ENCODE measurements at regions of chr6 and their contacts with region 1.

Region 1: DNA sequence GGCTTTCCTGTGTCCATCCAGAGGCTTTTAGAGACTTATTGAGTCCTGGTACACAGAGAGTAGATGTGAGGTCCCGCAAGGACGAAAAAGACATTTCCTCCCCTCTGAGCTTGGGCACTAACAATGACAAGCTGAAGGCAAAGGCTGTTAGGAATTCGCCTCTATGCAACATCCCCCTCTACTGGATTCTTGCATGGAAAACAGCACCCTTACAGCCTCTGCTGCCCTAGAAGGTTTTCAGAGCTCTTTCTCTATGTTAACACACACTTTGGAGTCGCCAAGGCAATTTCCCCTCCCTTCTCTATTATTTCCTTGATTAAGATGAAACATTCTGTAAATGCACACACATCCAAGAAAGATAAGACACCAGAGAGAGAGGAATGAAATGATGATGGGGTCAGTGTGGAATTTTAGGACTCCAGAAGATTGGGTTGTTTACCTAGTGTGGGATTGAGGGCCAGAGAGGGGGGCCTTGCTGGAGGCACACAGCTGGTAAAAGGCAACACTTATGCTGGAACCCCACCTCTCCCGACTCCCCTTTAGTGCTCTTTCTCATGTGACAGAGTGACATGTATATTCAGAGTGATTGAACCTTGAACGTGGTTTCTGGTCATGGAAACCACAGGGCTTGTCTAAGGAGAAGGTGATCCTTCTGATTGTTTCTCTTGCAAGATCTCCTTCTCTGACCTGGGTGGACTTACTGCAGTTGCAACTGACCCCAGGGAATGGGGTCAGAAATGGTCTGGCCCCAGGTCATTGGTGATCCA is 300.7 kb downstream of the CLIC5 start:
- DNase-seq: peak; percentile 68
- H3K4me3 ChIP-seq: no peak overlapping the region
- CTCF ChIP-seq: peak; percentile 78

Region 2: GRCh38 chr6:45483021-45483420 is 231.9 kb before region 1 on chr6:
- CTCF ChIA-PET with region 1: interaction called, 21 read pairs
- POLR2A ChIA-PET with region 1: interaction called, 3 read pairs
- DNase-seq: peak; percentile 97
- H3K4me3 ChIP-seq: no peak overlapping the region
- CTCF ChIP-seq: no peak

Region 3: GRCh38 chr6:45555981-45556771 is 158.7 kb before region 1 on chr6:
- CTCF ChIA-PET with region 1: interaction called, 17 read pairs
- POLR2A ChIA-PET with region 1: no interaction called
- DNase-seq: no peak
- H3K4me3 ChIP-seq: peak overlapping the region; percentile 40
- CTCF ChIP-seq: no peak

Region 4: DNA sequence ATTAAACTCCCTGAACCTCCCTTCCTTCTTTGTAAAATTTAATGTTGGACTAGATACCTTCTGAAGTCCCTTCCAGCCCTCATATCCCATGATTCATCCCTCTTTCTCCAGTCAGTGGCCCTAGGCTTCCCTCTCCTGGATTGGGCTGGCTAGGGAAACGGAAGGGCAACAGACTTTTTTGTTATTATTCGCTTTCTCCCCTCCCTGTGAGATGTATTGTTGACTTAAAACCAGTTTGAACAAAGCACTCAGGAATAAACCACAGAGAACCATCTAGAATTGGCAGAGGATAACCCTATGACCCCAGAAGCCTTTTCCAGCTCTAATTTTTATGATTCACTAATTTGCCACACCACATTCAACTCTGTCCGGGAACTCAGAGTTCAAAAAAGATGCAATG is 97.5 kb before region 1 on chr6:
- CTCF ChIA-PET with region 1: no interaction called
- POLR2A ChIA-PET with region 1: no interaction called
- DNase-seq: no peak
- H3K4me3 ChIP-seq: no peak overlapping the region
- CTCF ChIP-seq: peak; percentile 5

Region 5: GRCh38 chr6:45703041-45703739 is 11.7 kb before region 1 on chr6:
- CTCF ChIA-PET with region 1: interaction called, 27 read pairs
- POLR2A ChIA-PET with region 1: interaction called, 6 read pairs
- DNase-seq: no peak
- H3K4me3 ChIP-seq: no peak overlapping the region
- CTCF ChIP-seq: no peak

Region 6: DNA sequence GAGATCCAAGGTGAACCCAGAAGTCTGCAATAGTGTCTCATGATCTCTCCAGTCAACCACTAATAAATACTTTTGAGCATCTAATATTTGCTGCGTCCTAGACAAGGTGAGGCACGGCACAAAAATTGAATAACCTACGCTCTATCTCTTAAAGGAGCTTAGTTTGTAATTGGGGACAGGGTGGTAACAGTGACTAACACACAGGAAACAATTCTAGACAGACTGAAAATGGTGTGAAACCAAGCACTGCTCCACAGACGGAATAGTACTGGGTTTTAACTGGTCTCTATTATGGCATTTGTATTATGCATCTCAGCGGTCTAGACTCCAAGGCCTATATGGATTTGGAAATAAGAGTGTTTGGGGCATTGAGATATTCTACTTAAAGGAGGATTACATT is 180.6 kb after region 1 on chr6:
- CTCF ChIA-PET with region 1: no interaction called
- POLR2A ChIA-PET with region 1: no interaction called
- DNase-seq: no peak
- H3K4me3 ChIP-seq: no peak overlapping the region
- CTCF ChIP-seq: no peak

Measured in AG04449 (cell line).